Adrenal gland (tissue), 19 donors: ENCODE measurements at regions of chr3 and their contacts with region 1.

Region 1: DNA sequence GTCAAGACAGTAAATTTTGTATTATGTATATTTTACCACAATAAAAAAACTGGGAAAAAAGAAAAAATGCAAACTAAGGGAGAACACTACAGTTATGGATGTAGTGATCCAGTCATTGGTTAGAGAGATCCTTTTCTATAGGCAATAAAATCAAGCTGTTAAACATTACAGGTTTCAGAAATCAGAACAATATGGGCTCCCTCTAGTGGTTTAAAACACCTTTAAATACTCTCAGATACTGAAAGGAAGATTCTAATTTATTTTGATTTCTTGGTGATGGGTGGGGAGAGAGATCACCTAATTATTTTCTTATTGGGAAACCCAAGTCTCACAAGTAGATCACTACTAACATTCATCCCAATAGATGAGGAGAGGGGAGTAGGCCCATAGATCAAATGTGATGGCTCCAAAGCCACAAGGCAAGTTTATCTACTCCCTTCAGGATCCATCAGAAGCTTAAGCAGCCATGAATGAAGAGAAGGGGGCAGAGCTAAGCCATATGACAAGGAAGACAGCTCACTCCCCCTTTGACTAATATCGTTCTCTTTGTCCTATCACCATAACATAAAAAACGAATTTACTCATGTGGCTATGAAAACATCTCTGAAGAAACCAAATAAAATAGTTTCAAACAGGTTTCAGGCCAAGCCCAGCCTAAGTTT is 118.6 kb downstream of the ANO10 start:
- DNase-seq: no peak
- H3K4me3 ChIP-seq: no peak overlapping the region
- H3K27ac ChIP-seq: no peak overlapping the region
- H3K4me1 ChIP-seq: peaks cover 0 to 6% of the 10 kb centered on the region in 2 donors
- H3K27me3 ChIP-seq: no peaks in the 10 kb centered on the region
- CTCF ChIP-seq: peak; percentile 41 to 70 (median 54)
- POLR2A ChIP-seq: no peak

Region 2: GRCh38 chr3:42961633-42962032 is 541.6 kb before region 1 on chr3:
- intact Hi-C with region 1: loop called in 1 of 2 experiments (anchors 10 kb)
- DNase-seq: peak; percentile 30 to 82 (median 50)
- H3K4me3 ChIP-seq: no peak overlapping the region
- H3K27ac ChIP-seq: no peak overlapping the region
- H3K4me1 ChIP-seq: no peaks in the 10 kb centered on the region
- H3K27me3 ChIP-seq: no peaks in the 10 kb centered on the region
- CTCF ChIP-seq: peak; percentile 49 to 81 (median 73)
- POLR2A ChIP-seq: no peak

Region 3: DNA sequence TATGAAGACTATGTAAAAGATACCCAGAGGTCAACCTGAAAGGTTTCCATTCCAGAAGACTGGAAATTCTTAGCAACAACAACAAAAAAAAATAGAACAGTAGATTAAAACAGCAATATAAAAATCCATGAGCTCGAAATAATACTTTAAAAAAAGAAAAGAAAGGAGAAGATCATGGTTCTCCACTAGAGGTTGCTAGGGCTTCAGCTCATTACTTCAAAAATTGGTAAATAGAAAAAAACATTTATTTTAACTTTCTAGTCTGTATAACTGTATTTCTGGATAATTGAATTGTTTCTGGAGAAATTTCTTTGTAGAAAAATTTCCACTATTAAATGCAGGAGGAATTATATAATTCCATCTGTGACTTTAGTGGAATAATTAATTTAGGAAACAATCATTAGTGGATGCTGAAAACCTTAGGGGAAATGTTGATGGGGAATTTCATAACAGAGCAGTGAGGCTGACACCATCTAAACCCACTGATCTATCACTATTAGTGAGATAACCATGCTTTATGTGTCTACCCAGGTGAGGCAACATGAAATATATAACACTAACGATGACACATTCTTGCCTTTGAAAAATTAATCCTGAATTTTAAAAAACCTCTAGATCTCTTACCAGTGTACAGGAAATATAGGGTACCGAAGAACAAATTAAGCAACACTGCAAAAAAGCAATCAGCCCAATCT is 279.4 kb before region 1 on chr3:
- intact Hi-C with region 1: loop called (anchors 5 to 10 kb)
- DNase-seq: no peak
- H3K4me3 ChIP-seq: no peak overlapping the region
- H3K27ac ChIP-seq: no peak overlapping the region
- H3K4me1 ChIP-seq: no peaks in the 10 kb centered on the region
- H3K27me3 ChIP-seq: no peaks in the 10 kb centered on the region
- CTCF ChIP-seq: peak in 5 of 6 experiments; percentile 26 to 60 (median 51)
- POLR2A ChIP-seq: no peak

Region 4: DNA sequence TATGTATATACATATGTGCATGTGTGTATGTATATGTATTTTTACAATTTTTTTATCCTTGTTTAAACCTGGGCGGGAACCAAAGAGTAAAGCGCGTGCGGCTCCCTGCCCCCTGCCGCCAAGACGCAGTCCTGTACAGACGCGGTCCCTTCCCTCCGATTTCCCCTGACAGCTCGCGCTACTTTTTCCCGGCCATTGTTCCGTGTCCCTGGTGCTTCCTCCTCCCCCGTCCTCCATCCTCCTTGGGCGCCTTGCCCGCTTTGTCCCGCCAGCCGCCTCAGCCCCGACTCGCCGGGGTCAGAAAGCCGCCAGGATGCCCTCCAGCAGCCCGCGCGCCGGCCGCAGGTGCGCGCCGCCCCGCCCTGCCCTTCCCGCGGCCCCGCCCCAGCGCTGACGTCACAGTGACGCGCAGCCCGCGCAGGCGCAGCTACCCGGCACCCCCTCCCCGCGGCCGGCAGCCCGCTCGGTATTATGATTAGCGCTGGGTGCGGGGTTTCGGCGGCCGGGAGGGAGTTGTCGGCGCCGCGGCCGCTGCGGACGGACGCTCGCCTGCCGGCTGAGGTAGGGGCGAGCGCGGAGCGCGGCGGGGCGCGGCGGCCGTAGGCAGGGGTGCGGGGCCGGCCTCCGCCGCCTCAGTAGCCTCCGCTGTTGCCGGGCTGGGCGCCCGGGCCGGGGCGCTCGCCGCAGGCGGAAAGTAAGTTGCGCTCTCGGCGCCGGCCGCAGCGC is 216.9 kb before region 1 on chr3 and contains the start of gene SNRK:
- intact Hi-C with region 1: loop called in 1 of 2 experiments (anchors 10 kb)
- DNase-seq: peak; percentile 80 to 95 (median 91)
- H3K4me3 ChIP-seq: peak within 1 kb of the TSS in 3 of 4 donors; percentile 31 to 96 (median 56)
- H3K27ac ChIP-seq: peak within 1 kb of the TSS in 4 of 5 donors; percentile 55 to 99 (median 88)
- H3K4me1 ChIP-seq: peaks cover 21 to 43% of the 10 kb centered on the region in 2 donors
- H3K27me3 ChIP-seq: no peaks in the 10 kb centered on the region
- CTCF ChIP-seq: peak in 5 of 6 experiments; percentile 30 to 53 (median 35)
- POLR2A ChIP-seq: peak; percentile 92 to 94
- total RNA-seq, gene SNRK: 17.4 to 36.4 (median 24.9) TPM

Region 5: GRCh38 chr3:44464509-44464908 is 961.3 kb after region 1 on chr3:
- intact Hi-C with region 1: no loop called
- DNase-seq: no peak
- H3K4me3 ChIP-seq: no peak overlapping the region
- H3K27ac ChIP-seq: no peak overlapping the region
- H3K4me1 ChIP-seq: no peaks in the 10 kb centered on the region
- H3K27me3 ChIP-seq: no peaks in the 10 kb centered on the region
- CTCF ChIP-seq: no peak
- POLR2A ChIP-seq: no peak